HCT116 (cell line): ENCODE measurements at regions of chr1 and their contacts with region 1.

Region 1: GRCh38 chr1:207619871-207620542 is 24.9 kb upstream of the CR1L start:
- DNase-seq: peak; percentile 34
- ATAC-seq: peak; percentile 98
- H3K4me3 ChIP-seq: no peak overlapping the region
- H3K27ac ChIP-seq: no peak overlapping the region
- H3K4me1 ChIP-seq: peaks cover 0 to 3% of the 10 kb centered on the region in 2 experiments; a peak in 1 of 4 replicates
- H3K27me3 ChIP-seq: no peaks in the 10 kb centered on the region
- CTCF ChIP-seq: peak; percentile 53 to 77 (median 75); a peak in 5 of 6 replicates
- POLR2A ChIP-seq: no peak
- RAD21 ChIP-seq: peak; percentile 41; the same call in 1 of the 2 replicates

Region 2: DNA sequence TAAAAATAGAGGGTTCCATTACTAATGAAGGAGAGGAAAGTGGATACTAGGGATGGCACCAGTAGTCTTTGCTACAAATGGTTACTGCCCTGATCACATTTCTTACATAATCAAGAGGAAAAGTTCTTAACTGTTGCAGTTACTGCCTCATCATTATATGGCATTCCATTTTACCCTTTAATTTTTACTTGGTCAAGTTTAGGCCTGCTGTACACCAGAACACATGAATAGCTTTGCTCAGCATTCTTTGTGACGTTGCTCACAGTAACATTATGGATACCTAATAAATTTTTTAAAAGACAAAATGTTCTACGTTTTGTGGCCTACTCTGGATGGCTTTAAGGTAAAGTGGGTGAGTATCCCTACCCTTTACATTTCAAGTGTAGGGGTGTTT is 13.6 kb before region 1 on chr1:
- CTCF ChIA-PET with region 1: interaction called, 27 read pairs
- POLR2A ChIA-PET with region 1: interaction called, 3 read pairs
- RAD21 ChIA-PET with region 1: no interaction called
- intact Hi-C with region 1: no loop called
- DNase-seq: no peak
- ATAC-seq: no peak
- H3K4me3 ChIP-seq: no peak overlapping the region
- H3K27ac ChIP-seq: no peak overlapping the region
- H3K4me1 ChIP-seq: no peaks in the 10 kb centered on the region
- H3K27me3 ChIP-seq: no peaks in the 10 kb centered on the region
- CTCF ChIP-seq: no peak
- POLR2A ChIP-seq: no peak
- RAD21 ChIP-seq: no peak

Region 3: DNA sequence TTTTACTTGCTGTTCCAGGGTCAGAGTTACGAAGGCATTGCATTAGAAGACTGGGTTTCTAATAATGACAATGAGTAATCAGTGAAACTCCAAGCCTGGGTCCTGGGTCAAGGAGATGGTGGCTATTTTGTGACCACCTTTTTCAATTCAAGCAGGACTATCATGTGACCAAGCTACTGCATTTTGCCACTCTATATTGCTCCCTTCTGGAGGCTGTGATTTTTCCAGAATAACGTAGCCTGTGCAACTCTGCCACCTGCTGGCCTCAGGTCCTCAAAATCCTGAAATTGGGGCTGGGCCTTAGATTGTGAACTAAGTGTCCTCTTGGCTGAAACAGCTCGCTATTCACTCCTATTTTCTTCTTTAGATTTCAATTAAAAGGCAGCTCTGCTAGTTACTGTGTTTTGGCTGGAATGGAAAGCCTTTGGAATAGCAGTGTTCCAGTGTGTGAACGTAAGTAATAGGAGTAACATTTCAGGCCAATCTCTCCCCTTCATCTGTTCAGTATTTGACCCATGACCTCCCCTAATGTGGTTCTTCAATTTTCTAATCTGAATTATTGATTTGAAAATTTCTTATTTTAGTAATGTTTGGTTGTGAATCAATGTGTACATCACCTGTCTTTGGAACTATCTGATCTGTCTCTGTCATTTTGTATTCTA is 78.9 kb after region 1 on chr1:
- CTCF ChIA-PET with region 1: interaction called, 10 read pairs
- POLR2A ChIA-PET with region 1: no interaction called
- RAD21 ChIA-PET with region 1: interaction called in 1 of 2 experiments, 5 read pairs
- intact Hi-C with region 1: no loop called
- DNase-seq: peak; percentile 70
- ATAC-seq: peak; percentile 99
- H3K4me3 ChIP-seq: no peak overlapping the region
- H3K27ac ChIP-seq: no peak overlapping the region
- H3K4me1 ChIP-seq: 0 out of 4 replicates have a peak, but pooled peaks cover 0 to 3% of the 10 kb centered on the region in 2 experiments
- H3K27me3 ChIP-seq: no peaks in the 10 kb centered on the region
- CTCF ChIP-seq: peak; percentile 76 to 98 (median 77)
- POLR2A ChIP-seq: no peak
- RAD21 ChIP-seq: peak; percentile 83